ENCODE measurements at regions of chr19 and their contacts with region 1.

Region 1: DNA sequence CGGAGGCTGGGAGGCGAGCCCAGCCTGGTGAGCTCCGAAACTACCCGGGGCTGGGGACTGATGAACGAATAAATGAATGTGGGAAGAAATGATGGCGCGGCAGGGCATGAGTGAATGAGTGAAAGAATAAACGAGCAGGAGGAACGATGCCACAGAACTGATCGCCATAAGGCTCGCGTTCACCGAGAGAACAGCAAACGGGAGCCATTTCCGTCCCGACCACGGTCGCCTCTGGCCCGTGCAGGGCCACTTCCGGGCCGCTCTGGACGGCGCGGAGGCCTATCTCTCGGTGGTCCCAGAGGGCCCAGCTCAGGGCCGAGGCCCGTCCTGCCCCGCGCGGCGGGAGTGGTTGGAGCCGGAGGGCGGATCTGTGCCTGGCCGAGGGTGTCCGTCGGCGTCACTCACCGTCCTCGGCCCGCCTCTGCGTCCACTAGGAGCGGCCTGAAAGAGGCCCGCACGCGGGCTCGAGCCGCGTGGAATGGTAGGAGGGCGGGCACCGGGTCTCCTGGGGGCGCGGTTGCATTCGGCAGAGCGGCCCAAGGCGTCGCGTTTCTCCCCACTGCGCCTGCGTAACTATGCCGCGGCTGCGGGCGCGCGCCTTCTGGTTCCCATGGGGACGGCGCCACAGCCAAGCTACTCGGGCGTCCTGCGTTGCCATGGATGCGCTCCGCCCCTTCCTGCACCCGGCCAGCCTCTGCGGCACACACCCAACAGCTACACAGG is at the start of gene ZNF497:
- DNase-seq: peak; percentile 98
- ATAC-seq: peak; percentile 86
- H3K4me3 Mint-ChIP-seq: peak within 1 kb of the TSS; percentile 95
- H3K27ac Mint-ChIP-seq: peak within 1 kb of the TSS; percentile 97
- H3K4me1 Mint-ChIP-seq: peaks cover 21% of the 10 kb centered on the region
- H3K27me3 Mint-ChIP-seq: peaks cover 2% of the 10 kb centered on the region
- CTCF ChIP-seq: no peak
- total RNA-seq, gene ZNF497: 1.7 and 2.1 TPM in 2 replicates

Region 2: GRCh38 chr19:58237324-58237723 is 125.1 kb before region 1 on chr19:
- CTCF ChIA-PET with region 1: no interaction called
- POLR2A ChIA-PET with region 1: no interaction called
- intact Hi-C with region 1: no loop called
- DNase-seq: no peak
- ATAC-seq: no peak
- H3K4me3 Mint-ChIP-seq: no peak overlapping the region
- H3K27ac Mint-ChIP-seq: no peak overlapping the region
- H3K4me1 Mint-ChIP-seq: no peaks in the 10 kb centered on the region
- H3K27me3 Mint-ChIP-seq: no peaks in the 10 kb centered on the region
- CTCF ChIP-seq: no peak

Region 3: DNA sequence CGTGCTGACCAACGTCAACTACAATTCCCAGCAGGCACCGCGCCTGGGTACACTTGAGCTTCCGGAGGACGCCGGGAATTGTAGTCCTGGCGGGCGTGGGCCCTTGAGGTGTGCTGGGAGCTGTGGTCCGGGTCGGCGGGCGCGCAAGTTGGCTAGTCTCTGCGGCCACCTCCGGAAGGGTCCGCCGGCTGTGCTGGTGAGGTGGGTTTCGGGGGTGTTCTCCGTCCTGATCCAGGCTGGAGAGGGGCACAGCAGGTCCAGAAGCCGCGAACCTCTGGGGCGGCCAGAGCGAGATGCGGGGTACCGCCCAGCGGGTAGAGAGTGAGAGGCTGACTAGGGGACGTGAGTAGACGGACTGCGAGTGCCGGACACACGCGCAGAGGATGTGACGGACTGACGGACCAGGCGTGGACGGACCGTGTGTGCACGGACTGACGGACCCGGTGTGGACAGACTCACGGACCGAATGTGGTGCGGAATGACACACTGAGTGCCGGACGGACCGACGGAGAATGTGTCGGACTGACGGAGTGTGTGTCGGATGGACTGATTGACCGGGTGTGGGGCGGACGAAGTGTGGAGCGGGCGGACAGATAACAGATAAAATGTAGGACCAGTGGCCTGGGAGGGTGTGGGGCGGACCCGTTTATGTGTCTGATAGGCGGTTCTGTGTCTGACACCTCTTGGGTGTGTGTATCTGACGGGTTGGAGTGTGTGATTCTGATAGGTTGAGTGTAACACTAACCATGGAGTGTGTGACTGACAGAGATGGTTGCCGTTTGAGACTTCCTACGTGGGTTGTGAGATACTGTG is 35.3 kb before region 1 on chr19 and contains the start of gene ZSCAN22:
- CTCF ChIA-PET with region 1: no interaction called
- POLR2A ChIA-PET with region 1: interaction called, 24 read pairs
- intact Hi-C with region 1: loop called (anchors 1 kb)
- DNase-seq: peak; percentile 82
- ATAC-seq: peak; percentile 88
- H3K4me3 Mint-ChIP-seq: no peak within 1 kb of the TSS
- H3K27ac Mint-ChIP-seq: no peak within 1 kb of the TSS
- H3K4me1 Mint-ChIP-seq: peaks cover 2% of the 10 kb centered on the region
- H3K27me3 Mint-ChIP-seq: no peaks in the 10 kb centered on the region
- CTCF ChIP-seq: no peak
- total RNA-seq, gene ZSCAN22: 4.7 and 4.8 TPM in 2 replicates

Region 4: DNA sequence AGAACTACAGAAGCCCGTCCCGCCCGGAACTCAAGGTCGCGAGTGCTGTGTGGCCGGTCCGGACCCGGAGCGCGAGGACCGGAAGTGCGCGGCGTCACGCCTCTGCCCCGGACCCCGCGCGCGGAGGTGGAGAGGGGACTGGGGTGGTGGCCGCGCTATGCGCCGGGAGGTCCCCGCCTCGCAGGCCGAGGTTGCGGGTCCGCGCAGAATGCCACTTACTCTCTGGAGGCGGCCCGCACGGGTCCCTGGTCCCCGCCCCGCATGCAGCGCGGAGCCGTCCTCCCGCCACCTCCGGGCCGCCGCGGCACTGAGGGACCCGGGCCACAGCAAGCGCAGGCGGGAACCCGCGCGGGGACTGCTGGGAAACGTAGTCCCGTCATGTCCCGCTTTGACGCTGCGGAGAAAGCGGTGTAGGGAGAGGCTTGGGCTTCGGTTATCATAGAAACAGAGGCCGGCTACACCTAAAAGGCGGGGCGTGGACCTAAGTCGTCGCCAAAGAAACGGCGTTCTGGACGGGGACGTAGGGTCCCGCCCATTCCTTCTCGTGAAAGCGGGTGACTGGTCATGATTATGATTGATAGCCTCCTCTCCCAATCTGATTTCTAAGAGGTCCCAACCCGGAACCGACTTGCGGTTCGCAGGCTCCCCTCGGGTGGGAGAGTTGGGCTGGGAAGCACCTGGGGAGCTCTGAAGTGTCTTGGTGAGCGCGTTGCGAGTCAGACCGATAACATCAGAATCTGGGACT is 18.5 kb after region 1 on chr19 and contains the start of gene ZNF837:
- CTCF ChIA-PET with region 1: interaction called, 4 read pairs
- POLR2A ChIA-PET with region 1: interaction called, 89 read pairs
- intact Hi-C with region 1: loop called (anchors 1 kb)
- DNase-seq: peak; percentile 96
- ATAC-seq: peak; percentile 86
- H3K4me3 Mint-ChIP-seq: peak within 1 kb of the TSS; percentile 83
- H3K27ac Mint-ChIP-seq: peak within 1 kb of the TSS; percentile 87
- H3K4me1 Mint-ChIP-seq: peaks cover 37% of the 10 kb centered on the region
- H3K27me3 Mint-ChIP-seq: no peaks in the 10 kb centered on the region
- CTCF ChIP-seq: no peak
- total RNA-seq, gene ZNF837: 3.1 and 3.5 TPM in 2 replicates

Region 5: DNA sequence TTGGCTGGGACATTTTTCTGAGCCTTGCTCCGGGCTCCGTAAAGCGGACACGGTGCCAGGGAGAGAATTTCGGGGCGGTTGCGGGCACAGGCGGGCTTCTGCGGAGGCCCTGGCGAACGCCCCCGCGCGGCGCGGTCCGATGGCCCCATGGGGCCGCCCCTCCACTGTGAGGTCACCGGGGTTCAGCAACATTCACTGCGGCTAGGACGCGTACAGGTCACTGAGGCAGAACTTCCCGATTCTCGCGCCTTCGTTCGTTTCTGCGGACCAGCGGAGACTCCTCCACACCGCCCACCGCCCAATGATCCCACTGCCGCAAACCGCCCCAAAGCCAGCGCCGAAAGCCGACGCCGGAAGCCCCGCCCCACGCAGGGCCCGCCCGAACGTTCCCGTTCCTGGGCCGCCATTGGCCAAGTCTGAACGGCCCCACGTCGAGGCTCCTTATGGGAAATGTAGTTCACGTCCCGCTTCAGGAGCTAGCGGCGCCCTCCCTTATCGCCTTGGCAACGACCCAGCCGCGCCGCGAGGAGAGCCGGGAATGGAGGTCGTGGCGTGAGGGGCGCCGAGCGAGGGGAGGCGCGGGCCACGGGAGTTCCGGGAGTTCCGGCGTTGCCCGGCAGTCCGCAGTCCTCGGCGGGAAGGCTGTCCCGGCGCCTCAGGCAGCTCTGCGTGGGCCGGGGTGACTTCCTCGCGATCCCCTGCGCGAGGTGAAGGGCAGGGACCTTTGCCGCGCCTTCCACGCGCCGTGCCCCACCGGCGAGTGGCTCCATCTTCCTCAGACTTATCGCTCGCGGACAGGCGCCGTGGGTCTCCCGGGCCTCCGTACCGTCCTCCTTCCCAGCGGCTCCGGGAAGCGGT is 45.9 kb after region 1 on chr19 and contains the start of gene ZNF584:
- CTCF ChIA-PET with region 1: interaction called, 3 read pairs
- POLR2A ChIA-PET with region 1: interaction called, 26 read pairs
- intact Hi-C with region 1: loop called (anchors 1 kb)
- DNase-seq: peak; percentile 93
- ATAC-seq: peak; percentile 95
- H3K4me3 Mint-ChIP-seq: peak within 1 kb of the TSS; percentile 95
- H3K27ac Mint-ChIP-seq: peak within 1 kb of the TSS; percentile 92
- H3K4me1 Mint-ChIP-seq: peaks cover 32% of the 10 kb centered on the region
- H3K27me3 Mint-ChIP-seq: no peaks in the 10 kb centered on the region
- CTCF ChIP-seq: no peak
- total RNA-seq, gene ZNF584: 8.6 and 9.6 TPM in 2 replicates

Region 6: GRCh38 chr19:58475714-58476497 is 113.5 kb after region 1 on chr19 and contains the start of gene ZNF446:
- CTCF ChIA-PET with region 1: no interaction called
- POLR2A ChIA-PET with region 1: interaction called, 8 read pairs
- intact Hi-C with region 1: loop called (anchors 1 kb)
- DNase-seq: peak; percentile 91
- ATAC-seq: peak; percentile 88
- H3K4me3 Mint-ChIP-seq: peak within 1 kb of the TSS; percentile 94
- H3K27ac Mint-ChIP-seq: peak within 1 kb of the TSS; percentile 95
- H3K4me1 Mint-ChIP-seq: peaks cover 20% of the 10 kb centered on the region
- H3K27me3 Mint-ChIP-seq: no peaks in the 10 kb centered on the region
- CTCF ChIP-seq: no peak
- total RNA-seq, gene ZNF446: 9.6 and 10.4 TPM in 2 replicates

Region 7: GRCh38 chr19:58572818-58573657 is 210.6 kb after region 1 on chr19 and contains the start of gene MZF1:
- CTCF ChIA-PET with region 1: no interaction called
- POLR2A ChIA-PET with region 1: interaction called, 12 read pairs
- intact Hi-C with region 1: loop called (anchors 1 kb)
- DNase-seq: peak; percentile 100
- ATAC-seq: peak; percentile 61
- H3K4me3 Mint-ChIP-seq: peak within 1 kb of the TSS; percentile 97
- H3K27ac Mint-ChIP-seq: peak within 1 kb of the TSS; percentile 100
- H3K4me1 Mint-ChIP-seq: peaks cover 44% of the 10 kb centered on the region
- H3K27me3 Mint-ChIP-seq: no peaks in the 10 kb centered on the region
- CTCF ChIP-seq: no peak
- total RNA-seq, gene MZF1: 41.9 and 54.5 TPM in 2 replicates